GM13977 (cell line): ENCODE measurements at regions of chr18 and their contacts with region 1.

Region 1: GRCh38 chr18:31819925-31820229 is 59.2 kb upstream of the SLC25A52 start:
- DNase-seq: no peak
- CTCF ChIP-seq: no peak

Region 2: DNA sequence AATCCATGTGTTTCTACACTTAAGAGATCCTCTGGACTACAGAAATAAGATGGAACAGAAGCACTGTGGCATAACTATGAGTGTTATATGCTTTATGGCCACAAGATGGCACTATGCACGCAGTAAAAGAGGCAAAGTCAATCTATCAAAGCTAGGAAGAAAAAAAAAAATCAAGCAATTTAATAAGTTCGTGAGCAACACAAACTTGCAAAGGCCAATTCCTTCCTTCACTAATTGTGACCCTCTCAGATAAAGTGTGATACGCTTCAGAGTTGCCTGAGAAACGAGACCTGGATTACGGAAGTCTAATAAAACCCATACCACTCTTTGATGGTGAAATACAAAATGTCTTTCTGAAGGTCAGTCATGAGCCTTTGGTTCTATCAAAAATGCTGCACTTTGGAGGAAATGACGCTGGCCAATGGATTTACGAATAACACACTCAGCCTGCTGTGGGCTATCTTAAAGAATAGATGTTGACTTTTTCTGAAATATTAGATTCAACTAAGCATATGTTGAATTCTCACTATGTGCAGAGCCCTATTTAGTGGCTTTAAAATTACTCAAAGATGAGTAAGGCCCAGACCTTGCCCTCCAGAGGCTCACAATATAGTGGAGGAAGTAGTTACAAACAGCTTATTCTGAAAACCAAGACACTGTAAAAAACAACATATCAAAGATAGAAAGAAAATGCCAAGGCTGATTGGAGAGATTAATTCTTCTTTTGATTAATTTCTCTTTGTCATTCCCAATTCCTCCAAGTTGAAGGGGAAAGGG is 263.7 kb before region 1 on chr18:
- in situ Hi-C with region 1: loop called (anchors 10 kb)
- DNase-seq: peak; percentile 54
- CTCF ChIP-seq: peak; percentile 72

Region 3: GRCh38 chr18:31741097-31741735 is 78.7 kb before region 1 on chr18:
- in situ Hi-C with region 1: loop called (anchors 10 kb)
- DNase-seq: no peak
- CTCF ChIP-seq: peak; percentile 69